A549 (cell line): ENCODE measurements at regions of chr15 and their contacts with region 1.

Region 1: DNA sequence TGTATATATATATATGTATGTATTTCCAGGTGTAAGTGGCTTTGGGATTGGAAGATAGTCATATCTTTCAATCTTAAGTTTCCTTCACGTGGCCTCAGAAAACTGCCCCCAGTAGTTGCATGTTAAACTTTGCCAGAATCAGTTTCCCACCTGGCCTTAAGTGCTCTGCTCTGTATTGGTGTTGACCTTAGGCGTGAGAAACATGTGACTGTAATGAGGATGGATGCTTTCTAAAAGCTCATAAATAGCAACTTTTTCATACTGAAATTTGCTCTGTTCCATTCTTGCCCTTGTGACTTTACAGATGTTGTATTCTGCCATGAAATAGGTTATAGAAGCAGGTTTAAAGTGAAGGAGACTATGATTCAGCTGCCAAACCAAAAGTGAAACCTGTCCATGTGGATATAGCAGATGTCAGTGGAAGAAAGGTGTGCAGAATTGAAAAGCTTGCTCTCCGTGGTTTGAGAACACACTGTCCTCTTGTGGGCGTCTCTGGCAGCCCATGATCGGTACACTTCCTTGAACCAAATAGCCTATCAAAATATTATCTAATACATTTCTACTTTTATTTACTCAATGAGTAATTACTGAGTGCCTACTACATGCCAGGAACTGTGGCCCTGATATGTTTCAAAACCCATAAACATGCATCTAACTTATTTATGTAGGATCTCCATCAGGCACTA is 15.8 kb downstream of the SCG5 start:
- DNase-seq: no peak
- ATAC-seq: no peak
- H3K4me3 ChIP-seq: no peak overlapping the region
- H3K27ac ChIP-seq: no peak overlapping the region
- H3K4me1 ChIP-seq: peaks cover 24% of the 10 kb centered on the region
- CTCF ChIP-seq: 0 out of 3 replicates have a peak, but pooled peaks have one; percentile 11
- EP300 ChIP-seq: no peak
- POLR2A ChIP-seq: no peak
- RAD21 ChIP-seq: no peak

Region 2: GRCh38 chr15:32641517-32642059 is 15.8 kb before region 1 on chr15 and contains the start of gene SCG5:
- CTCF ChIA-PET with region 1: interaction called, 22 read pairs
- POLR2A ChIA-PET with region 1: no interaction called
- DNase-seq: no peak
- ATAC-seq: peak in 1 of 2 experiments; percentile 43; a peak in 3 of 6 replicates
- H3K4me3 ChIP-seq: no peak within 1 kb of the TSS
- H3K27ac ChIP-seq: no peak within 1 kb of the TSS
- H3K4me1 ChIP-seq: peaks cover 7% of the 10 kb centered on the region; the same call in 1 of the 3 replicates
- CTCF ChIP-seq: no peak
- EP300 ChIP-seq: no peak
- POLR2A ChIP-seq: no peak
- RAD21 ChIP-seq: no peak
- polyA plus RNA-seq, gene SCG5: 9.4 and 10.5 TPM in 2 replicates

Region 3: GRCh38 chr15:32736005-32736700 is 78.8 kb after region 1 on chr15:
- CTCF ChIA-PET with region 1: interaction called, 14 read pairs
- POLR2A ChIA-PET with region 1: no interaction called
- DNase-seq: no peak
- ATAC-seq: no peak
- H3K4me3 ChIP-seq: no peak overlapping the region
- H3K27ac ChIP-seq: no peak overlapping the region
- H3K4me1 ChIP-seq: no peaks in the 10 kb centered on the region
- CTCF ChIP-seq: no peak
- EP300 ChIP-seq: no peak
- POLR2A ChIP-seq: no peak
- RAD21 ChIP-seq: no peak

Region 4: GRCh38 chr15:32849769-32850668 is 192.7 kb after region 1 on chr15:
- CTCF ChIA-PET with region 1: interaction called, 44 read pairs
- POLR2A ChIA-PET with region 1: no interaction called
- DNase-seq: peak; percentile 59 to 87
- ATAC-seq: peak; percentile 78 to 83
- H3K4me3 ChIP-seq: no peak overlapping the region
- H3K27ac ChIP-seq: peak overlapping the region; percentile 79 to 86
- H3K4me1 ChIP-seq: peaks cover 56% of the 10 kb centered on the region
- CTCF ChIP-seq: no peak
- EP300 ChIP-seq: peak; percentile 96 to 97
- POLR2A ChIP-seq: no peak
- RAD21 ChIP-seq: peak; percentile 14 to 71; a peak in 3 of 5 replicates

Region 5: DNA sequence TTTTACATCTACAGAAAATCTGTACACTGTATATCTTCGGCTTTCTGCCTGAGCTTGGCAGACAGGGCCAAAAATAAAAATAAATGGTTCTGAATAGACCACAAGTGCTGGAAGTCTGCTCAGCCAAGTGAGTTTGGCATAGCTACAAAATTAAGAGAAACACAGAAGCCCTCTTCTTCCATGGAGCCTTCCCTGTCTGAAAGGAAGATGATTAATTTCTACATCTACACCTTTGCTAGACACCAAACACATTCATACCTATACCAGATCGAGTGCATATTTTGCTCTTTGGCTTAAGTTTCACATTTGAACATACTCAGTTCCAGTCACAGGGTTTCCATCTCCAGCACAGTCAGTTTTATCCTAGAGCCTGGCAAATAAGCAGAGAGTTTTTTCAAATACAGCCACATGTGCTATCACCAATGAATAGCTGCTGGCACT is 285.1 kb after region 1 on chr15:
- CTCF ChIA-PET with region 1: interaction called, 17 read pairs
- POLR2A ChIA-PET with region 1: no interaction called
- DNase-seq: no peak
- ATAC-seq: no peak
- H3K4me3 ChIP-seq: no peak overlapping the region
- H3K27ac ChIP-seq: no peak overlapping the region
- H3K4me1 ChIP-seq: no peaks in the 10 kb centered on the region
- CTCF ChIP-seq: no peak
- EP300 ChIP-seq: no peak
- POLR2A ChIP-seq: no peak
- RAD21 ChIP-seq: no peak

Region 6: DNA sequence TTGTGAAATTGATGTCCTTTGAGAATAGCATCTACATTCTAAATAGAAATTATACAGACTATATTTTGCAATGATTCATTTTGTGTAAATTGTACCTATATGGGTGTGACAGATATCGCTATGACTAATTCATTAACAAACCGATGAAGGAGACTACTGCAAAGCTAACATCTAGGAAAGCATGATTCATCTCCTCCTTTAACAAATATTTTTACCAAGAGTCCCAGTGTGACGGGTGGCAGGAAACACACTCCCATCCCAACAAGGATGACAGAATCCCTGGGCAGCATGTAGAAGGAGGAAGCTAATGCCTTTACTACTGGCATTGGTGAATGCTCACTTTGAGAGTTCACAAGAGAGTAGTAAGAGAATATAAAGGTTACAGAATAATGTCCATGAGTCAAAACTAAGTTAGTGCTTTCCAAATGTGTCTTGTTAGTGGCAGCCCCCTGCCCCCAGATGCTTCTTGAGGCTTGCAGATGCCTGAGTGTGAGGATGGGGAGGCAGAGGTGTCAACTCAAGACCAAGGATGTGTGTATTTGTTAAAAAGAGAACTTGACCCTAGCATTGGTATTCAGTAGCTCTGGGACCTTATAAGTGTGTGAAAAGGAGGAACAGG is 356.6 kb after region 1 on chr15:
- CTCF ChIA-PET with region 1: interaction called, 19 read pairs
- POLR2A ChIA-PET with region 1: no interaction called
- DNase-seq: peak; percentile 75 to 81
- ATAC-seq: peak; percentile 93 to 94
- H3K4me3 ChIP-seq: no peak overlapping the region
- H3K27ac ChIP-seq: 0 out of 6 replicates have a peak overlapping the region, but pooled peaks of 1 of the 2 experiments have one; percentile 15
- H3K4me1 ChIP-seq: peaks cover 17% of the 10 kb centered on the region
- CTCF ChIP-seq: no peak
- EP300 ChIP-seq: no peak
- POLR2A ChIP-seq: no peak
- RAD21 ChIP-seq: no peak